ENCODE measurements at regions of chr1 and their contacts with region 1.

Region 1: GRCh38 chr1:6235296-6235677 is 477 bp downstream of the ICMT start:
- DNase-seq: no peak
- H3K4me3 ChIP-seq: peak overlapping the region; percentile 64 to 85
- H3K27ac ChIP-seq: peak overlapping the region; percentile 39 to 60
- H3K4me1 ChIP-seq: peaks cover 0 to 19% (median 13%) of the 10 kb centered on the region in 4 donors
- H3K27me3 ChIP-seq: peaks cover 0 to 16% of the 10 kb centered on the region in 2 donors
- CTCF ChIP-seq: no peak

Region 2: DNA sequence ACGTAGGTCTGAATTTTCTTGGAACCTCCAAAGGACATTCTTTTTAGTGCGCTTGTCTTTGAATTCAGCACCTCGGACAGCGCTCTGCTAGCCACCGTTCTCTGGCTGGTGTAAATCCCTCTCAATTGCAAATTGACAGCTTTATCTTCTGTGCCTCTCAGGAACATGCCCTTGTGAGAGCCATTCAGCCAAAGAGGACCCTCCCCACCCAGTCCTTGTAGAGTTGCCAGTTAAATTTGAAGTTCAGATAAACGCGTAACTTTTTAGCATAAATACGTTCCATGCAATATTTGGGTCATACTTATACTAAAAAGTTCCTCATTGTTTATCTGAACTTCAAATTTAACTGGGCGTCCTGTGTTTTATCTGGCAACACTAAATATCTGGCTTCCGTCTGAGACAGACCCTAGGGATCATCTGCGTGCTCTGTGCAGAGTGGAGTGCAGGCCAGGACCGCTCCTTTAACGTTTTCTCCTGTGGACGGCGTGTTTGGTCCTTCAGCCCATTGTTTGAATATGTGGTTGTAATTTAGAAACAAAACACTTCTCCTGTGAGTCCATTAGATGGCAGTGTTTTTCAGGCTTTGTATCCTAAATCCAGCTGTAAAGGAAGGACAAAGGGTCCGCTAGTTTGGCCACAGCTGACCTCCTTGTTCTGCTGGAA is 182.6 kb before region 1 on chr1:
- intact Hi-C with region 1: loop called (anchors 5 kb)
- DNase-seq: peak in 1 of 2 donors; percentile 60
- H3K4me3 ChIP-seq: no peak overlapping the region
- H3K27ac ChIP-seq: no peak overlapping the region
- H3K4me1 ChIP-seq: no peaks in the 10 kb centered on the region
- H3K27me3 ChIP-seq: peaks cover 0 to 12% of the 10 kb centered on the region in 2 donors
- CTCF ChIP-seq: peak; percentile 24 to 30

Region 3: GRCh38 chr1:6199298-6200187 is 35.7 kb before region 1 on chr1 and contains the start of gene RPL22:
- intact Hi-C with region 1: loop called (anchors 5 kb)
- DNase-seq: peak; percentile 99
- H3K4me3 ChIP-seq: peak within 1 kb of the TSS; percentile 92 to 97
- H3K27ac ChIP-seq: peak within 1 kb of the TSS; percentile 71 to 84
- H3K4me1 ChIP-seq: peaks cover 0 to 31% (median 21%) of the 10 kb centered on the region in 4 donors
- H3K27me3 ChIP-seq: no peaks in the 10 kb centered on the region
- CTCF ChIP-seq: no peak

Measured in tibial artery (tissue), 4 donors.